ENCODE measurements at regions of chr18 and their contacts with region 1.

Region 1: DNA sequence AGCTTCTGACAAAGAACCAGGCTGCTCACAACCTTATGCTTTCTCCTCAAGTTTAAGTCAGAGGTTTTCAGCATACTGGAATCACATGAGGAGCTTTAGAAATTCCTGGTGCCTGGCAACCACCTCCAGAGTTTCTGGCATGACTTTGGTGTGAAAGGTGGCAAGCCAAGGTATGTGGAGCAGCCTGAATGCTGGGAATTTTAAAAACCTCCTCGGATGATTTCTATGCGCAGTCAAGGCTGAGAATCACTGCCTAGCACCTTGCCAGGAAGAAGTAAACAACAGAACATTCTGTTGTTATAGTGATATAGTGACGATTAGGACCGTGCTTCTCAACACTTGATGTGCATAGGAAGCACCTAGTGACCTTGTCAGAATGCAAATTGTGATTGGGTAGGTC is 11.7 kb downstream of the CCBE1 start:
- DNase-seq: no peak
- H3K4me3 ChIP-seq: no peak overlapping the region
- H3K27ac ChIP-seq: no peak overlapping the region
- H3K4me1 ChIP-seq: no peaks in the 10 kb centered on the region
- H3K27me3 ChIP-seq: no peaks in the 10 kb centered on the region
- CTCF ChIP-seq: no peak

Region 2: DNA sequence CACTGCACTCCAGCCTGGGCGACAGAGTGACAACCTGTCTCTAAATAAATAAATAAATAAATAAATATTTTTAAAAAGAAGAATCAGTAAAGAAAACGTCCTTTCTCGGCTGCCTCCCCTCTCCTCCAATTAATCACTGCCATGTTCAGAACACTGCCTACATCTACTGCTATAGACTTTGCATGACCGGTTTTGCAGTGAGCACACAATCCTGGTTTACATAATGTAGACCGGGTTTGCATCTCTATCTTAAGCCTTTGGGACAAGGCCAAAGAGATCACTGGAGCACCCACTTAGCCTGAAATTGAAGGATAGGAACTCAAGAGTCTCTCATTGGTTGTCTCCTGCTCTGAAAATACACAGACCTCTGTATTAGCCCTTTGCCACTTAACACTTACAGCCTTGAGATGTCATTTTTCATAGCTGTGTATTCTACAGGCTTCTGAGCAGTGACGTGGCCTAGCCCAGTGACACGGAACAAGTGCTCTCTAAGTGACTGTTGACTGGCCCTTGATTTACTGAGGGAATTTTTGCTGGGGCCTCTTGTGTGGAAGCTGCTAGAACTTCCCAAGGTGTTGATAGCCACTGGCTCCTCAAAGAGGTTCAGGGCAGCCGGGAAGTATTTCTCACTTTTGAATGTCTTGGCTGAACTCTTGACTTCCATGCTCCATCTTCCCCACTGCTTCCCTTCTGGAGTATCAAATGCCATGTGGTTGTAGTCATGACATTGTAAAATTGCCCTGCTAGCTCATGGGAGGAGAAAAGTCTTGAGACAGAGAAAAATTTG is 57.0 kb after region 1 on chr18:
- CTCF ChIA-PET with region 1: no interaction called
- dilution Hi-C with region 1: no loop called
- in situ Hi-C with region 1: no loop called
- intact Hi-C with region 1: no loop called
- DNase-seq: no peak
- H3K4me3 ChIP-seq: no peak overlapping the region
- H3K27ac ChIP-seq: no peak overlapping the region
- H3K4me1 ChIP-seq: peaks cover 15% of the 10 kb centered on the region
- H3K27me3 ChIP-seq: no peaks in the 10 kb centered on the region
- CTCF ChIP-seq: no peak

Region 3: DNA sequence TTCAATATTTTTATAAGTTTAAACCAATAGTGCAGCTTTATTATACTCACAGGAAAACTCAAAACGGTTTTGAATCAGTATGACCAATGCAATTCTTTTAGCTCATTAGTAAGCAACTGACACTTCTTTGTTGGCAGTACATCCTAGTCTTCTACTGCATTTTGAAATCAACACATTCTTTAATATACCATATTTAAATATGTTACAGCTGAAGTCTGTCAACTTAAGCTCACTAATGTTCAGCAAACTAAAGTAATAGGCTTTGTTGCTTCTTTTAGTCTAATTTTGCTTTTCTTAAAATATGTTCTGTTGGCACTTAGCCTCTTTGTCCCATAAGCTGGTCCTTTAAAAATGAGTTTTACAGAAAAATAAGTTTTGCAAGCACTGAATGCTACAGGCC is 67.2 kb after region 1 on chr18:
- CTCF ChIA-PET with region 1: no interaction called
- dilution Hi-C with region 1: loop called (anchors 5 kb)
- in situ Hi-C with region 1: no loop called
- intact Hi-C with region 1: no loop called
- DNase-seq: no peak
- H3K4me3 ChIP-seq: no peak overlapping the region
- H3K27ac ChIP-seq: no peak overlapping the region
- H3K4me1 ChIP-seq: peaks cover 14% of the 10 kb centered on the region
- H3K27me3 ChIP-seq: no peaks in the 10 kb centered on the region
- CTCF ChIP-seq: no peak

Region 4: DNA sequence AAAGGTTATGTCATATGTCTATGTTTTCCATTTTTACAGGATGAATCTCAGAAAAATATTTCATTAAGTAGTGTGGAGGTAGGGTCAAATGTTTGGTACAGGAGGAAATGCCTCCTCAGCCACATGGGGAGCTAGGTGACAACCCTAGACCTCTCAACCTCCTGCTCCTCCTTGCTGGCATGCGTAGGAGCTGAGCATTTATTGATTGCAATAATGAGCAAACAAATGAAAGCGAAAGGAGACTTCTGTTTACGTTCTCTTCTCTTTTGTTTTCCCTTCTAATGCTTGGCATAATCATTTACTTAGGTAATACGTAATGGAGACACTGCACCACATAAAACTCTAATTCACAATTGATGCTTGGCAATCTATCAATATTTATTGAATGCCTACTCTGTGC is 106.9 kb after region 1 on chr18:
- CTCF ChIA-PET with region 1: no interaction called
- dilution Hi-C with region 1: loop called (anchors 5 kb)
- in situ Hi-C with region 1: no loop called
- intact Hi-C with region 1: no loop called
- DNase-seq: no peak
- H3K4me3 ChIP-seq: no peak overlapping the region
- H3K27ac ChIP-seq: no peak overlapping the region
- H3K4me1 ChIP-seq: peaks cover 14% of the 10 kb centered on the region
- H3K27me3 ChIP-seq: no peaks in the 10 kb centered on the region
- CTCF ChIP-seq: no peak

Measured in mammary epithelial cell (primary cell).